ENCODE measurements at regions of chr18 and their contacts with region 1.

Region 1: GRCh38 chr18:44679056-44679905 is 1.4 kb upstream of the SETBP1 start:
- DNase-seq: peak in 6 of 9 donors; percentile 3 to 75 (median 24)
- ATAC-seq: peak; percentile 94
- H3K4me3 ChIP-seq: peak overlapping the region; percentile 50
- H3K4me3 Mint-ChIP-seq: peak overlapping the region in 8 of 10 donors; percentile 57 to 81 (median 72)
- H3K27ac ChIP-seq: no peak overlapping the region
- H3K27ac Mint-ChIP-seq: no peak overlapping the region
- H3K4me1 ChIP-seq: peaks cover 0 to 8% of the 10 kb centered on the region in 2 donors
- H3K4me1 Mint-ChIP-seq: peaks cover 0 to 12% (median 7%) of the 10 kb centered on the region in 7 donors
- H3K27me3 ChIP-seq: peaks cover 0 to 9% of the 10 kb centered on the region in 2 donors
- H3K27me3 Mint-ChIP-seq: peaks cover 17 to 35% (median 28%) of the 10 kb centered on the region in 5 donors

Region 2: DNA sequence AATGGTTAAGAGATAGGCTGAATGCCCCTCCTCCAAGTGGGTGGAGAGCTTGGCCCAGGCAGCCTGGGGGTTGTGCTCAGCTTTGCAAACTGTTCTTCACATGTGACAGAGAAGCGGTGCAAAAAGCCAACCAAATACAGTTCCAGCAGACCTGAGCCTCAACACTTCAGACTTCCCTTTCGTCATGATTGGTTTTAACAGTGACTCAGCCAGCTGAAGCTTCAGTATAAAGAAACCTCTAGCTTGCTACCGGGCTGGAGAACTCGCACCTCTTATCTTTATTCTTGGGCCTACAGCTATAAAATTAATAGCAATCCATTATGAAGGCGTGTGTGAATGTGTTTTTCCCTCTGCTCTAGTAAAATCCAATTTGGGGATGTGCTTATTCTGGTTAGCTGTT is 21.4 kb after region 1 on chr18:
- CTCF ChIA-PET with region 1: no interaction called
- POLR2A ChIA-PET with region 1: no interaction called
- intact Hi-C with region 1: no loop called
- DNase-seq: no peak
- ATAC-seq: peak; percentile 91
- H3K4me3 ChIP-seq: no peak overlapping the region
- H3K4me3 Mint-ChIP-seq: no peak overlapping the region
- H3K27ac ChIP-seq: no peak overlapping the region
- H3K27ac Mint-ChIP-seq: no peak overlapping the region
- H3K4me1 ChIP-seq: no peaks in the 10 kb centered on the region
- H3K4me1 Mint-ChIP-seq: peaks cover 0 to 13% (median 4%) of the 10 kb centered on the region in 7 donors
- H3K27me3 ChIP-seq: no peaks in the 10 kb centered on the region
- H3K27me3 Mint-ChIP-seq: peaks cover 0 to 38% (median 0%) of the 10 kb centered on the region in 5 donors

Region 3: DNA sequence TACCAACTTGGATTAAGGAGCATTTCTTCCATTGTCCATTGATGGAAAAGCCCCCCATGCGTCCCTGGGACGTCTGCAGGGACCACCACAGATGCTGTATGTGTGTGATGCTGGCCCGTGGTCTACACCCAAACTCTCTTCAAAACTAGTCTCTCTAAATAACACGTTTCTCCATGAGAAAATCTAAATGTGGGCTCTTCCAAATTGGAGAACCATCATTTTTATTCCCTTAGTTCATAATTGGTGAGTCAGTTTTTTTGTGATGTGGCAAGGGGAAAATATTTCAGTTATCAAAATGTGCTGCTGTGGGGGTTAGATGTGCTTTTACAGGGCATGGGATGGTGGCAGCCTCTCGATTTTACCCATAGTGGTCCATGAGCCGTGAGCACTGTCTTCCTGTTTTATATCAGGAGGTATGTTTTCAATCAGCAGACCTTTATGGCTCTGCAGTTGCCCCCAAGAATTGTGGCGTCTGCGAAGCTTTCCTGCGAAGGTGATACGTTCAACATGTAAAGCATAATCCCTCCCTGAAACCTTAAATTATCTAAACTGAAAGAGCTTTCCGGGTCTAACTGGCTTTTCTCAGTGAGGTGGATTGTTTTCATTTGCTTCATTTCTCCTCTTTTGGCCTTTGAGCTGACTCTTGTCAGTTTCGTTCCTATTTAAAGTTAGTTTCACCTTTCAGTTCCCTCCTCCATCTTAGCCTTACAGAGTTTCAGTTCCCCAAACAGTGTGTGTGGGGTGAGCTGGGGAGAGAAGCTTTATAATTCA is 79.8 kb after region 1 on chr18:
- CTCF ChIA-PET with region 1: no interaction called
- POLR2A ChIA-PET with region 1: no interaction called
- intact Hi-C with region 1: loop called in 1 of 2 experiments (anchors 1 kb)
- DNase-seq: peak in 3 of 9 donors; percentile 1 to 41 (median 9)
- ATAC-seq: peak; percentile 86
- H3K4me3 ChIP-seq: peak overlapping the region; percentile 15
- H3K4me3 Mint-ChIP-seq: peak overlapping the region in 9 of 10 donors; percentile 42 to 74 (median 68)
- H3K27ac ChIP-seq: no peak overlapping the region
- H3K27ac Mint-ChIP-seq: peak overlapping the region; percentile 32 to 92 (median 74)
- H3K4me1 ChIP-seq: peaks cover 0 to 16% of the 10 kb centered on the region in 2 donors
- H3K4me1 Mint-ChIP-seq: peaks cover 15 to 31% (median 21%) of the 10 kb centered on the region in 7 donors
- H3K27me3 ChIP-seq: no peaks in the 10 kb centered on the region
- H3K27me3 Mint-ChIP-seq: peaks cover 0 to 17% (median 0%) of the 10 kb centered on the region in 5 donors

Region 4: GRCh38 chr18:44838971-44839666 is 159.8 kb after region 1 on chr18:
- CTCF ChIA-PET with region 1: no interaction called
- POLR2A ChIA-PET with region 1: no interaction called
- intact Hi-C with region 1: loop called in 1 of 2 experiments (anchors 1 kb)
- DNase-seq: peak in 4 of 9 donors; percentile 2 to 66 (median 20)
- ATAC-seq: peak; percentile 90
- H3K4me3 ChIP-seq: no peak overlapping the region
- H3K4me3 Mint-ChIP-seq: peak overlapping the region in 1 of 10 donors; percentile 60
- H3K27ac ChIP-seq: no peak overlapping the region
- H3K27ac Mint-ChIP-seq: peak overlapping the region in 3 of 9 donors; percentile 2 to 30 (median 14)
- H3K4me1 ChIP-seq: peaks cover 6 to 18% of the 10 kb centered on the region in 2 donors
- H3K4me1 Mint-ChIP-seq: peaks cover 0 to 35% (median 11%) of the 10 kb centered on the region in 7 donors
- H3K27me3 ChIP-seq: no peaks in the 10 kb centered on the region
- H3K27me3 Mint-ChIP-seq: peaks cover 0 to 15% (median 4%) of the 10 kb centered on the region in 5 donors

Region 5: DNA sequence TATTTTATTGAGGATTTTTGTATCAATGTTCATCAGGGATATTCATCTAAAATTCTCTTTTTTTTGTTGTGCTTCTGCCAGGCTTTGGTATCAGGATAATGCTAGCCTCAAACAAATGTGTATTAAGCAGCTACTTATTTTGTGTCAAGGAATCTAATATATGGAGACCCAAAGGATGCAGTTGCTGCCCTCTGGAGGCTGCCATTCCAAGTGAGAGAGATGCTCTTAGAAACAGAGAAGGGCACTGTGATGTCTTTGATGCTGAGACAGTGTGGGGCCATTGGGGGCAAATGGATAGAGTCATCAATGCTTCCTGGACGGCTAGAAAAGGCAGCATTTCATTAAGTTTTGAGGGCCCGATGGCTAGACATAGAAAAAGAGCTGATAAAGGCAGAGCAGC is 294.0 kb after region 1 on chr18:
- CTCF ChIA-PET with region 1: no interaction called
- POLR2A ChIA-PET with region 1: no interaction called
- intact Hi-C with region 1: loop called in 1 of 2 experiments (anchors 1 kb)
- DNase-seq: no peak
- ATAC-seq: no peak
- H3K4me3 ChIP-seq: no peak overlapping the region
- H3K4me3 Mint-ChIP-seq: no peak overlapping the region
- H3K27ac ChIP-seq: no peak overlapping the region
- H3K27ac Mint-ChIP-seq: no peak overlapping the region
- H3K4me1 ChIP-seq: no peaks in the 10 kb centered on the region
- H3K4me1 Mint-ChIP-seq: no peaks in the 10 kb centered on the region
- H3K27me3 ChIP-seq: no peaks in the 10 kb centered on the region
- H3K27me3 Mint-ChIP-seq: peaks cover 0 to 7% (median 2%) of the 10 kb centered on the region in 5 donors

Region 6: GRCh38 chr18:45993389-45993788 is 1314.1 kb after region 1 on chr18:
- CTCF ChIA-PET with region 1: no interaction called
- POLR2A ChIA-PET with region 1: no interaction called
- intact Hi-C with region 1: no loop called
- DNase-seq: no peak
- ATAC-seq: no peak
- H3K4me3 ChIP-seq: no peak overlapping the region
- H3K4me3 Mint-ChIP-seq: no peak overlapping the region
- H3K27ac ChIP-seq: no peak overlapping the region
- H3K27ac Mint-ChIP-seq: no peak overlapping the region
- H3K4me1 ChIP-seq: peaks cover 0 to 19% of the 10 kb centered on the region in 2 donors
- H3K4me1 Mint-ChIP-seq: peaks cover 9 to 29% (median 25%) of the 10 kb centered on the region in 7 donors
- H3K27me3 ChIP-seq: no peaks in the 10 kb centered on the region
- H3K27me3 Mint-ChIP-seq: no peaks in the 10 kb centered on the region